ENCODE measurements at regions of chr12 and their contacts with region 1.

Region 1: DNA sequence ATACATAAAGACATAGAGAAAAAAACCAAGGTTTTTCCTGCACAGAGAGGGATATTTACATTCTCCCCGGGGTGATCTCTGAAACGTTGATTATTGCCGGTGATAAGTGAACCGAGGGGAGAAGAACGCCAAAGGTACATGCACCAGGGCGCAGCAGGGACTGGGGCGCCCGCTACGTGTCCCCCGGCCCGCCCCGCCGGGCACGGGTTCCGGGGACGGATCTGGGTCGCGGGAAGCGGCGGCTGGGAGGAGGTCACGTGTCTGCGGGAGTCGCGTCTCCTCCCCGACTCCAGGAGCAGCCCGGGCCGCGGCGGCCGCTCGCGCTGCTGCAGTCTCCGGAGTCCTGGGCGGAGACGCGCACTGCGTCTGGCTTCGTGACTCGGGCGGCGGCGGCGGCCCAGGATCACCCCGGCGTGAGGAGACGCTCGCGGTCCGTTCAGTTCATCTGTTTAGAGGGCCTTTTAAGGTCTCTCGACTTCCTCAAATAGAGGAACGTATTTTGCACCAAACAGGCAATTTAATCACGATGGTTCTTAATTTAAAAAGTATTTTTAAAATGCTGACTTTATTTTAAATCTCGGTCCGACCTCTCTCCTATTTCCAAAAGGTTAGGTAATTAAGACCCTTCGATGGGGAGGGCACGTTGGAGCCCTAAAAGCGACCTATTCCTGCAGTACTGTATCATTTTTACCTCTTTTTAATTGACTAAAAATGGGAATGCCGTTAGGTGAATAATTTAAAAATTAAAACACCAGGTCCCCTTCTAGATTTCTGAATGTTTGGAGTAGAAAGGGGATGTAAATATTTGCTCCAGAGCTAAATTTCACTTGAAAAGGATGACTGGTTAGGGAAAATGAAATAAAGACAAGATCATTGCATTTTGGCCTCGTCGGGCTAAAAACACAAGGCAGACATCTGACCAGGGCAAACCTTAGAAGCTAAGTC is 1.8 kb upstream of the BHLHE41 start:
- DNase-seq: peak; percentile 72 to 91
- H3K4me3 ChIP-seq: peak overlapping the region; percentile 87
- H3K27ac ChIP-seq: peak overlapping the region; percentile 97
- H3K4me1 ChIP-seq: peaks cover 26% of the 10 kb centered on the region
- H3K27me3 ChIP-seq: no peaks in the 10 kb centered on the region
- CTCF ChIP-seq: peak; percentile 35; the same call in 1 of the 2 replicates

Region 2: DNA sequence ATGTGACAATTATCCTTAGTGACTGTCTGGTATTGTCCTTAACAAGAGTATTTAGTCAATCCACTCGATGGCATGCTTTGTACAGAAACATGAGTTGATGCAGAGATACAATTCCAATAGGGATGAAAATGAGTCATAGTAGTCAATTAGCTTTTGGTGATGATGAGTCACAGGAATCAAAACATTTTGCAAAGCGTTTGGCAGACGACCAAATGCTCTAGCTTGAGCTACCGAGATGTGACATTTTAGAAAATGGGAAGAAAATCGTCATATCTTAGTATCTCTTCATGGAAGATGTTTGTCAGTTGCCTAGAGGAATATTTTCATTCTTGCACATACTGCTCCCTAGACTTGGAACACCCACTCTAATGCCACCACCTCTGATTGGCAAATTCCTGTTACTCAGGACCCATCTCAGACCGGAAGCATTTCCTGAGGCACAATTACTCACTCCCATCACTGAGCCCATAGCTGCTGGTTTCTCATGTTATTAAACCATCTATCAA is 668.5 kb before region 1 on chr12:
- CTCF ChIA-PET with region 1: no interaction called
- POLR2A ChIA-PET with region 1: interaction called, 24 read pairs
- intact Hi-C with region 1: no loop called
- DNase-seq: peak; percentile 63 to 89
- H3K4me3 ChIP-seq: peak overlapping the region; percentile 24; the same call in 1 of the 2 replicates
- H3K27ac ChIP-seq: peak overlapping the region; percentile 67
- H3K4me1 ChIP-seq: peaks cover 22% of the 10 kb centered on the region
- H3K27me3 ChIP-seq: no peaks in the 10 kb centered on the region
- CTCF ChIP-seq: no peak

Region 3: DNA sequence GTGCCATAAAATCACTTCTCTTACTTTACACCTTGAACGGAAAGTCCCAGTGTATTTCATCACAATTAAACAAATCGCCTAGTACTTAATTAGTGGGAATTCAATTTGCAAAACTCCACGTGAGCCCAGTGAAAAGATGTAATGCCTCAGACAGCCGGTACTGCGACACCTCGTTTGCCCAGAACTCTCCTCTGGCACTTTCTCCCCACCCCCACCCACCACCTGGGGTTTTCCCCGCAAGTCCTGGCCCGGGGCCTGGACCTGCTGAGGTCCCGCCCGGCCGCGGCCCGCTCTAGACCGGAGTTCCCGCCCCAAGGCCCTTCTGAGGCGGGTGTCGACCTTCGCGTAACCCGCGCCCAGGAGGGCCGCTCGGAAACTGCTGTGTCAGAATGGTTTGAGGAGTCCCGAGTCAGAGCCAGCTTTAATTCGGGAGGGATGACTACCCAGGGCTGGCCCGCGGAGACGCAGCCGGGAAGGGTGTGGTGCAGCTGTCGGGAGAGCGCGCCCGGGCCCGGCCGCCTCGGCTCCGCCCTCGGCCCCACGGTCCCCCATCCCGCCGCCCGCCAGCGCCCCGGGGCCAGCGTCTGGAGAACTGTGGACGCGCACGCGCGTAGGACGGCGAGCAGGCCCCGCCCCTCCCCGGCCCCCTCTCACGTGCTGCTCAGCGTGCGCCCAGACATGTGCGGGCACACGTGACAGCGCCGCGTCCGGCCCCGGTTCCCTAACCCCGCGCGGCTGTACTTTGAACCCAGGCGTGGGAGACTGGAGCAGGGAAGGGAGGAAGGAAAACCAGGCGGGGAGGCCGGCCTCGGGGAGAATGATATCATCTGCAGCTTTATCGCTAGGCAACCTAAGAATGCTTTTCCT is 12.5 kb before region 1 on chr12:
- CTCF ChIA-PET with region 1: no interaction called
- POLR2A ChIA-PET with region 1: interaction called, 15 read pairs
- intact Hi-C with region 1: loop called (anchors 1 kb)
- DNase-seq: peak; percentile 91 to 92
- H3K4me3 ChIP-seq: peak overlapping the region; percentile 57
- H3K27ac ChIP-seq: peak overlapping the region; percentile 93
- H3K4me1 ChIP-seq: peaks cover 61% of the 10 kb centered on the region
- H3K27me3 ChIP-seq: no peaks in the 10 kb centered on the region
- CTCF ChIP-seq: peak; percentile 46

Region 4: GRCh38 chr12:26195641-26196420 is 69.2 kb after region 1 on chr12:
- CTCF ChIA-PET with region 1: no interaction called
- POLR2A ChIA-PET with region 1: interaction called, 5 read pairs
- intact Hi-C with region 1: loop called (anchors 2 kb)
- DNase-seq: peak in 1 of 2 experiments; percentile 46
- H3K4me3 ChIP-seq: peak overlapping the region; percentile 79
- H3K27ac ChIP-seq: peak overlapping the region; percentile 38
- H3K4me1 ChIP-seq: peaks cover 34% of the 10 kb centered on the region
- H3K27me3 ChIP-seq: no peaks in the 10 kb centered on the region
- CTCF ChIP-seq: no peak

Region 5: DNA sequence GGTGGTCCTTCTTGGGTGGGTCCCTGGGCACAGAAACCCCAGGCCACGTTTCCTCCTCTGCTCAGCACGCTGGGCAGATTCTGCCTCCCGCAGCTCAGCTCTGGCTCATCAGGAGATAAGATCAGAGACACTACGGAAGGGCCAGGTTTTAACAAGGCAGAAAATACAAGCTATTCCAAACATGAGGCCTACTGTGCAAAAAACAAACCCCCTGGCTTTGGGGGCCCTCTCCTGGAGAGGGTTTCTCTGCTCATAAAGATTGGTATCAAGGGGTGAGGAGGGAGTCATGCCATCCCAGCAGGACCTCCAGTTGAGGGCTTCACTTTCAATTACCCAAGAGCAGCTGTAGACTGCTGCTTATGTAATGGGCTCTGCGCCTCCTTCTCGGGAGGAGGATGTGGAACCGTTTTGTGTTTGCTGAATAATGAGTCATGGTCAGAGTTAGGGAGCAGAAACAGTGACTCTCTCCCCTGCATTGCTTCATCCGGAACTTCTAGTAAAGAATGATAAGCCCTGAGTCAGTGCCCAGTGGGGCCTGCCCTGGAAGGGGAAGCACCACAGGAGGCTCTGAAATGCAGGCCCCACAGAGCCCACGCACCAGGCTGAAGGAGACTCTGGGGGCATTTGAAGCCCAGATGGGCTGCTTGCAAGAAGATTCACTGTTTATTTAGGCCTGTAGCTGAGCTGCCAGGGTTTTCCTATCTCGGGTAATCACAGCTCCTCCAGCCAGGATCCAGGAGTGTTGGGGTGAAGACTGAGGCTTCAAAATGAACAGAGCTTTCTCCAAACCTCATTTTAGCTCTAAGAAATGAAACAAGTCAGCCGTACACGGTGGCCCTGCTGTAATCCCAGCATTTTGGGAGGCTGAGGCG is 148.1 kb after region 1 on chr12:
- CTCF ChIA-PET with region 1: interaction called, 5 read pairs
- POLR2A ChIA-PET with region 1: no interaction called
- intact Hi-C with region 1: loop called (anchors 1 kb)
- DNase-seq: peak; percentile 88 to 99
- H3K4me3 ChIP-seq: peak overlapping the region; percentile 16; the same call in 1 of the 2 replicates
- H3K27ac ChIP-seq: peak overlapping the region; percentile 98
- H3K4me1 ChIP-seq: peaks cover 67% of the 10 kb centered on the region
- H3K27me3 ChIP-seq: no peaks in the 10 kb centered on the region
- CTCF ChIP-seq: peak; percentile 66

Region 6: GRCh38 chr12:26434299-26435068 is 307.9 kb after region 1 on chr12:
- CTCF ChIA-PET with region 1: no interaction called
- POLR2A ChIA-PET with region 1: no interaction called
- intact Hi-C with region 1: loop called (anchors 1 kb)
- DNase-seq: peak; percentile 40 to 55
- H3K4me3 ChIP-seq: no peak overlapping the region
- H3K27ac ChIP-seq: no peak overlapping the region
- H3K4me1 ChIP-seq: peaks cover 5% of the 10 kb centered on the region; the same call in 1 of the 2 replicates
- H3K27me3 ChIP-seq: no peaks in the 10 kb centered on the region
- CTCF ChIP-seq: peak; percentile 69

Region 7: GRCh38 chr12:26701604-26702215 is 575.1 kb after region 1 on chr12:
- CTCF ChIA-PET with region 1: interaction called, 3 read pairs
- POLR2A ChIA-PET with region 1: no interaction called
- intact Hi-C with region 1: loop called (anchors 5 kb)
- DNase-seq: peak in 1 of 2 experiments; percentile 40
- H3K4me3 ChIP-seq: no peak overlapping the region
- H3K27ac ChIP-seq: no peak overlapping the region
- H3K4me1 ChIP-seq: peaks cover 7% of the 10 kb centered on the region; the same call in 1 of the 2 replicates
- H3K27me3 ChIP-seq: no peaks in the 10 kb centered on the region
- CTCF ChIP-seq: peak; percentile 78

Region 8: GRCh38 chr12:27133022-27133590 is 1006.5 kb after region 1 on chr12:
- CTCF ChIA-PET with region 1: no interaction called
- POLR2A ChIA-PET with region 1: no interaction called
- intact Hi-C with region 1: no loop called
- DNase-seq: no peak
- H3K4me3 ChIP-seq: no peak overlapping the region
- H3K27ac ChIP-seq: no peak overlapping the region
- H3K4me1 ChIP-seq: no peaks in the 10 kb centered on the region
- H3K27me3 ChIP-seq: no peaks in the 10 kb centered on the region
- CTCF ChIP-seq: no peak